Heart left ventricle (tissue), 16 donors: ENCODE measurements at regions of chr1 and their contacts with region 1.

Region 1: DNA sequence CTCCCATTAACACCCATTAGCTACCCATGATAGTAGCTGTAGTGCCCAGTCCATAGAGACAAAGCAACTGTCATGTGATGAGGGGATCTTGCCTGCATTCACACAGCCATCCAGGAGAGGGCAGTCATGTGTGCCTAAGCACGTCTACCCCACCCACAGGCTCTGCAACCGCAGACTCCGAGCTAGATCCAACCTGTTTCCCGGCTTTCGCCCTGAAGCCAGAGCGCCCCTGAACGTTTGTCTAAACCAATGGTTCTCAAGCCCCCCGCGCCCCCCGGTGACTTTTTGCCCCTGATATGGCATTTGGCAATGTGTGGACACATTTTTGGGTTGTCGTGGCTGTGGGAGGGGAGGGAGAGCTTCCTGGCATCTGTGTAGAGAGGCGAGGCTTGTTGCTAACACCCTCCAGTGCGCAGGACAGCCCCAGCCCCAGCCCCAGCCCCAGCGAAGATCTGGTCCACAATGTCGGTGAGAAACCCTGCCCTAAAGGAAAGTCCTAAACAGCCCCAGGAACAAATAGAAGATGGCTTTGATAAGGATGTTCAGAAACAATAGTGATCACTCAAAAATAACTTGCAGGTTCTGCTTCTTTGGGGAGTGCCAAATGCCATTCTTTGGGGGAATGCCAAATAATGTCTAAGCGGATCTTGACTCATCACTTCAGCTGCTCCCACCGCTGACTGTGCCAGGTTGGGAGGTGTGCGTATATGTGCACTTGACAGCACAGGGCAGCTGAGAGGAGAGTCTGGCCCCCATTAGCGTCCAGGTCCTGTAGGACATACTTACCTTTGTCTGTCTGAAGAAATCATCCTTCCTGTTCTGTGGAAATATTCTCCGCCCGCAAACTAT is 34.5 kb downstream of the SLC44A3 start:
- DNase-seq: peak; percentile 84 to 90 (median 87)
- ATAC-seq: peak; percentile 89 to 95 (median 94)
- H3K4me3 ChIP-seq: peak overlapping the region in 11 of 12 donors; percentile 10 to 59 (median 50)
- H3K27ac ChIP-seq: peak overlapping the region in 10 of 12 donors; percentile 12 to 79 (median 70)
- H3K4me1 ChIP-seq: peaks cover 0 to 43% (median 17%) of the 10 kb centered on the region in 12 donors
- H3K27me3 ChIP-seq: no peaks in the 10 kb centered on the region
- CTCF ChIP-seq: peak; percentile 79 to 97 (median 90)
- POLR2A ChIP-seq: peak in 1 of 2 donors; percentile 27

Region 2: GRCh38 chr1:94873522-94874351 is 19.1 kb after region 1 on chr1:
- intact Hi-C with region 1: no loop called
- DNase-seq: peak in 2 of 5 donors; percentile 52 to 62
- ATAC-seq: peak; percentile 81 to 95 (median 82)
- H3K4me3 ChIP-seq: no peak overlapping the region
- H3K27ac ChIP-seq: peak overlapping the region in 6 of 12 donors; percentile 2 to 64 (median 56)
- H3K4me1 ChIP-seq: peaks cover 0 to 14% (median 8%) of the 10 kb centered on the region in 12 donors
- H3K27me3 ChIP-seq: no peaks in the 10 kb centered on the region
- CTCF ChIP-seq: no peak
- POLR2A ChIP-seq: no peak

Region 3: GRCh38 chr1:94919241-94920030 is 64.8 kb after region 1 on chr1:
- intact Hi-C with region 1: loop called in 4 of 10 experiments (anchors 2 to 10 kb)
- DNase-seq: no peak
- ATAC-seq: peak in 2 of 4 donors; percentile 10 to 12
- H3K4me3 ChIP-seq: peak overlapping the region in 1 of 12 donors; percentile 1
- H3K27ac ChIP-seq: peak overlapping the region in 2 of 12 donors; percentile 1 to 18
- H3K4me1 ChIP-seq: peaks cover 3 to 99% (median 66%) of the 10 kb centered on the region in 12 donors
- H3K27me3 ChIP-seq: no peaks in the 10 kb centered on the region
- CTCF ChIP-seq: no peak
- POLR2A ChIP-seq: no peak